ENCODE measurements at regions of chrX and their contacts with region 1.

Region 1: DNA sequence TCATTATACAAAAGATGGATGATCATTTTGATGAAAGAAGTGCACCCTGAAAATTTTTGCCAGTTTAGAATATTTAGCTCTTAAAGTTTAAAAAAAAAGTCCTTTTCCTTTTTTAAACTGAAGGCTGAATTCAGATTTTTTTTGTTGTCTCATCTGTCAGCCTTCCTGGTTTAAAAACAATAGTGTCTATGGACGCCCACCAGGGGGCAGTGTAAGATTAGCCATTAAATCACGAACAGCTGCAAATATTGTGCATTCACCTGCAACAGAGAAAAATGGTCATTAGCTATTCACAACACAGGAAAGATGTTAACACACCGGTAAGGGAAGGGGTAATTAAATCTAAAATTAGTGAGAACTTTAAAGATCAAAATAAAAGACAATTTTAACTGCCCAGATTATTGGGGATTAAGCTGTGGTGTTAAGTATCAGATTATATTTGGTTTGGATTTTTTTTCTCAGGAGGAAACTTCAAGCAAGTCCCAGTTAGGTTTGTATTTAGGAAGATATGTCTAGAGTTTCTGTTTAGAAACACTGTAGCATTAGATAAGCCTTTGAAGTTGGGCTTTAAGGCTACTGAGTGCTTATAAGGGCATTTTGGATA is 4.4 kb upstream of the CXorf38 start:
- DNase-seq: peak; percentile 34
- ATAC-seq: no peak

Region 2: DNA sequence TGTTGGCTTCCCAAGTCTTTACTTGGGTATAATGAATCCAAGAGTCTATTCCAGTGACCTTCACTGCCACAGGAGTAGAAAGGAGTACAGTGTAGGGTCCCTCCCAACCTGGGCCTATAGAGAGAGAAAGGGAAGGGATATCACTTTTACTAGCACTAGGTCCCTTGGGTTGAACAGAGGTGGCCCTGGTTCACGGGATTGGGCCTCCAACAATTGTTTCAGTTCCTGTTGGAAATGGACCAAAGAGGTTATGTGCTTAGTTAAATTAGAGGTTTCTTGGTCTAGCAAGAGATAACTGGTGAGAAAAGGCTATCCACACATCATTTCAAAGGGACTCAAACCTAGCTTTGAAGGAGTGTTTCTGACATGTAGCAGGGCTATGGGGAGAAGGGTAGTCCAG is 140.7 kb after region 1 on chrX:
- intact Hi-C with region 1: loop called (anchors 10 kb)
- DNase-seq: no peak
- ATAC-seq: no peak

Region 3: DNA sequence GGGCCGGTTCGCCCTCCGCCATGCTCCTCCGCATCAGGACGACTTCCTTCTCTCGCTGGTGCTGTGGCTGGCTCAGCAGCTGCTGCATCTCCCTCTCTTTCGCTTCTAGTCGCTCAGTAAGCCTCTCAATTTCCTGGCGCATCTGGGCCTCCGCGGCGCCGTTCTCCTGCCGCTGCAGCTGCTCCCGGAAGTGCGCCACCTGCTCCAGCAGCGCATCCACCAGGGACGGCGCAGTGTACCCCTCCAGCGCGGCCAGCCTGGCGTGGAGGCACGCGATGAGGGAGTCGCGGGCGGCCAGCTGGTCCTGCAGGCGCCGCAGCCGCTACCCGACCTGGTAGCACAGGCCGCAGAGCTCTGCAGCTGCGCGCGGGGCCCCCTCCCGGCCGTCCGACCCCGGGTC is 181.0 kb after region 1 on chrX:
- intact Hi-C with region 1: no loop called
- DNase-seq: no peak
- ATAC-seq: no peak

Region 4: DNA sequence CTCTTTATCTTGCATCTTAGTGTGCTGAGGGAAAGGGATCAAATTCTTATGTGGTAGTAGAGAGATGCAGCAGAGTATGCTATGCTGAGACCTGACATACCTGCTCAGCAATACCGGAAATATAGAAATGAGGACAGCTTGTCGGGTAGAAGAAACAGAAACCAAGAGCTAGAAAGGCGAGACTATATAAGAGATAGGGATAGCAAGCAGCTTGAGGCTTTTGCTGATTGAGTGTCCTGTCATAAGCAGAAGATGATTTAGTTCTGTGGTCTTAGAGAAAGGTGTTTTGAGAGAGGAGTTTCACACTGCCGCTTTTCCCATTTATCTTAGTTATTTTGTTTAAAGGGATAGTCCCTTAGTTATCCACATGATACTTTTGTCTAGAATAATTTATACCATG is 465.2 kb after region 1 on chrX:
- intact Hi-C with region 1: loop called (anchors 10 kb)
- DNase-seq: no peak
- ATAC-seq: no peak

Measured in left ventricle myocardium superior (tissue), 1 donor.